Panc1 (cell line): ENCODE measurements at regions of chr12 and their contacts with region 1.

Region 1: GRCh38 chr12:10212201-10213131 is at the start of gene GABARAPL1:
- DNase-seq: peak; percentile 90
- ATAC-seq: peak; percentile 94
- H3K4me3 ChIP-seq: peak within 1 kb of the TSS; percentile 72 to 85
- H3K27ac ChIP-seq: peak within 1 kb of the TSS; percentile 82
- H3K4me1 ChIP-seq: no peaks in the 10 kb centered on the region; the same call in 1 of the 2 replicates
- H3K27me3 ChIP-seq: no peaks in the 10 kb centered on the region
- CTCF ChIP-seq: no peak
- total RNA-seq, gene GABARAPL1: 24.1 TPM

Region 2: DNA sequence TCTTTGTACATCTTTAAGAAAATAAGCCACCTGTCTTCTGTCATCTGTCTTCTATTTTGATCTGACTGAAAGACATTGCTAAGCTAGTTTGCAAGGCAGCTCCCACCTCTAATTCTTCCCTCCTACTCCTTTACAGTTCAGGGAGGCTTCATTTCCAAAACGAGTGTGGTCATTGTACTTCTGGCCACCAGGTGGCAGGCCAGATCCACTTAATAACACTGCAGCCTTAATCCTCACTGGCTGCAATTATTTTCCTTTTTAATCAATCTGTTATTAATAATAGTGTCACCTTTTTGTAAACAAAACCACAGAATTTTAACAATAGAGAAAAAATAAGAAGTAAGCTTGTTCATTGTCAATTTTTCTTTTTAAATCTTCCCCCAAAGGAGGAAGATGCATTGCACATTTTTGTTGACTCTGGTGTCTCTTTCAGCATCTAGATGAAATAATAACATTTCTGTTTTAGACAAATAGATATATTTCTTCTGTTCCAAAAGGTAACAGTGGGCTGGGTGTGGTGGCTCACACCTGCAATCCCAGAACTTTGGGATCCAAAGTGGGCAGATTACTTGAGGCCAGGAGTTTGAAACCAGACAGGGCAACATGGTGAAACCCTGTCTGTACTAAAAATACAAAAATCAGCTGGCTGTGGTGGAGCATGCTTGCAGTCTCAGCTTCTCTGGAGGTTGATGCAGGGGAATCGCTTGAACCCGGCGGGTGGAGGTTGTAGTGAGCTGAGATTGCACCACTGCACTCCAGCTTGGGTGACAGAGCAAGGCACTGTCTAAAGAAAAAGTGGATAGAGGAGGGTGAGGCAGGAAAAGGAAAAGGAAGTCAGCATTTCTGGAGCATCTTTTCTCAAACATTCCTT is 23.5 kb after region 1 on chr12:
- CTCF ChIA-PET with region 1: no interaction called
- POLR2A ChIA-PET with region 1: interaction called, 16 read pairs
- in situ Hi-C with region 1: no loop called
- intact Hi-C with region 1: no loop called
- DNase-seq: no peak
- ATAC-seq: peak; percentile 83
- H3K4me3 ChIP-seq: no peak overlapping the region
- H3K27ac ChIP-seq: peak overlapping the region; percentile 21; the same call in 1 of the 2 replicates
- H3K4me1 ChIP-seq: no peaks in the 10 kb centered on the region
- H3K27me3 ChIP-seq: no peaks in the 10 kb centered on the region
- CTCF ChIP-seq: peak; percentile 76

Region 3: DNA sequence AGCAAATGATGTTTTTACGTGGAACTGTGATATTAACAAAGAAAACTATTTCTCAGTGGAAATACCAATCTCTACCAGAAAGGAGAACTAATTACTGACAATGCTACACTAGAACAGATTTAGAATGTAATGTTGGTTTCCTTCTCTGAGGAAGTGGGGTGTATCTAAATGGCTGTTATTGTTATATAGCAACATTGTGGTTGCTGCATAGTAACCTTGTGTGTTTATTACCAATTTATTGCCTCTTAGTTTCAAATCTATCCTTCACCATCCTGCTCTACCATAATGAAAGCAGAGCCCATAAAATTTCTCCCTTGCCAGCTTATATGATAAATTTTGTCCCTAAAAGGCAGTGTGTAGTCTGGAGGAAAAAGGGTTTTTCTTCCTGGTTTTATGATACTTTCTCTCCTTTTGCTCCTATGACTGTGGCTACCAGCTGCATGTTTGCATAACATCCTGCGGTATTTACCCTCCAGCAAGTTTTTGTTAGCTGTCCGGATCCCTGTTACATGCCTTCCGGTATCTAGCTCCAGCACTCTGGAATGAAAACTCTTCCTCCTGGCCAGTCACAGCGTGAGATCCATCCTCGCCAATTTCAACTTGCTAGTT is 183.0 kb after region 1 on chr12:
- CTCF ChIA-PET with region 1: no interaction called
- POLR2A ChIA-PET with region 1: interaction called, 11 read pairs
- in situ Hi-C with region 1: no loop called
- intact Hi-C with region 1: no loop called
- DNase-seq: peak; percentile 68
- ATAC-seq: peak; percentile 90
- H3K4me3 ChIP-seq: peak overlapping the region; percentile 39 to 64
- H3K27ac ChIP-seq: peak overlapping the region; percentile 96
- H3K4me1 ChIP-seq: peaks cover 39% of the 10 kb centered on the region
- H3K27me3 ChIP-seq: no peaks in the 10 kb centered on the region
- CTCF ChIP-seq: no peak

Region 4: GRCh38 chr12:10448236-10448635 is 235.8 kb after region 1 on chr12:
- CTCF ChIA-PET with region 1: no interaction called
- POLR2A ChIA-PET with region 1: interaction called, 11 read pairs
- in situ Hi-C with region 1: no loop called
- intact Hi-C with region 1: no loop called
- DNase-seq: no peak
- ATAC-seq: no peak
- H3K4me3 ChIP-seq: no peak overlapping the region
- H3K27ac ChIP-seq: no peak overlapping the region
- H3K4me1 ChIP-seq: no peaks in the 10 kb centered on the region
- H3K27me3 ChIP-seq: no peaks in the 10 kb centered on the region
- CTCF ChIP-seq: no peak